Left cardiac atrium (tissue), 4 donors: ENCODE measurements at regions of chr6 and their contacts with region 1.

Region 1: GRCh38 chr6:157428427-157429202 is 47.6 kb downstream of the ZDHHC14 start:
- DNase-seq: no peak
- ATAC-seq: peak; percentile 16 to 21

Region 2: GRCh38 chr6:157392927-157393668 is 35.5 kb before region 1 on chr6:
- intact Hi-C with region 1: loop called in 1 of 2 experiments (anchors 5 kb)
- DNase-seq: no peak
- ATAC-seq: peak; percentile 60 to 86

Region 3: GRCh38 chr6:157405986-157406385 is 22.6 kb before region 1 on chr6:
- intact Hi-C with region 1: no loop called
- DNase-seq: peak; percentile 44
- ATAC-seq: peak; percentile 73 to 97